ENCODE measurements at regions of chr2 and their contacts with region 1.

Region 1: DNA sequence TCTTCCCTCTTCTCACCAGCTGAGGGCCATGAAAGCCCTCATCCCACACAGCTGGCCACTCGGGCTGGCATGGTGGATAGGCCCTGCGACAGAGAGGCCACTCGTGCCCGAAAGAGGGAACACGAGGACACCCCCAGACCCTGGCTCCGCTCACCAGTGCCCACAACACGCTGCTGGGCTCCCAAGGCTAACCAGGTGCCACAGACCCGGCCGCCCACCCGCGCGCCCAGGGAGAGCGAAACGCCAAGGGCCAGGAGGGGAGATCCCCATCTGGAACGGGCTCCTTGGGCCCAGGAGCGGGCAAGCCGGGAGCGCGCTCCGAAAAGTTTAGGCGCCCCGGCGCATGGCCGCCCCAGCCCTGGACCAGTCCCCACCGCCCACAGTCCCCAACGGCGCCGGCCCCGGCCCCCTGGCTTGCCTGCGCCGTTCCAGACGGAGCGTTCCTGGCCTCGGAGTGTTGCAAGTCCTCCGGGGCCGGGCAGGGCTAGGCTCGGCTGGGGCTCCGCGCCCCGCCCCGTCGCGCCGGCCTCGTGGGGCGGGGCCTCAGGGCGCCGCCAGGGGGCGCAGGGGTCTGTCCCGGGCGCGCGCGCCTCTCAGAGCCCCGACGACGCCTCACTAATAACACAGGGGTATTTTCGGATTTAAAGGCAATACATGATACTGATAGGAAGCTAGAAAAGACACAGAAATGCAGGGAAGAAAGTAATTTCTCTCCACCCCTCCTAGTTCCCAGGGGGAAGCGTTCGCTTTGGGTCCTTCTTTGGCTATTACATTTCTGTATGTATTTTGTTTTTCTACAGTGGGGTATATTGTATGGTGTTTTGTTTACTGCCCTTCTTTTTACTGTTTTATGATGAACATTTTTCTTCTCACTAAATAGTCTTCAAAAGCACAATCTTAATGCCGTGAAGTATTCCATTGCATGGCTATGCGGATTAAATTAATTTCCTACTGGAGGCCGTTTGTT is at the start of gene TMBIM1:
- DNase-seq: peak; percentile 83
- H3K4me3 Mint-ChIP-seq: peak within 1 kb of the TSS; percentile 80
- H3K27ac Mint-ChIP-seq: peak within 1 kb of the TSS; percentile 89
- H3K4me1 Mint-ChIP-seq: peaks cover 51% of the 10 kb centered on the region
- H3K27me3 Mint-ChIP-seq: no peaks in the 10 kb centered on the region
- total RNA-seq, gene TMBIM1: 71.8 to 79.2 TPM

Region 2: DNA sequence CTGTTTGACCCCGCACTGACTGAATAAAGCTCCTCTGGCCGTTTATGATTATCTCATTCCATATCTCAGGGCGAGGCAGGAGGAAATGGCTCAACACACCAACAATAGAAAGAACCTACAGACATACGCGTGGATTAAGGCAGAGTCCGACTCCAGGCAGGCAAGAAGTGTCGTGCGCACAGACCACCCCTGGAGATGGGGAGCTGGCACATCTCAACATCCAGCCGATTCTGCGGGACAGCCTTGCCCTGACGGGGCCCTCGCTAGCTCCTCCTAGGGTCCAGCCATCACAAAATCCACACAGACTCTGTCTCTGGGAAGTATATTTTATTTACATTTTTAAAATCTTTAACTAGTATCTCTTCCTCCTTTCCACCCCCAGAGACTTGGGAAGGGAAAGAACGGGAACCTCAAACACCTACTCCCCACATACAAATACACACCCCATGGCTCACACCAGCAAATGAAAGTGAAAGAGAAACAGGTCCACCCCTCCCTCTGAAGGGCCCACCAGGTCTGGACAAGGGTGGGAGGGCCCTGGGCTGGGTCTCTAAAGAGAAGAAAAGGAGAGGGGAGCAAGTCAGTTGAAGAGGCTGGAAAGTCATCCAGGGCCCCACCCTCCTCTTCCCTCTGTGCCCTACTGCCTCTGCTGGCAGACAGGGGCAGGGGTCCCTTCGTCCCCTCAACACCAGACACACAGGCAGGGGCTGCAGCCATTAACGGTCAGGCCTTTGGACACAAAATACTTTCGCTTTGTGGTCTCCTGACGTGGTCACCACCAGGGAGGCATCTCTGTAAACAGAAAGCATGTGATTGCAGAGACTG is 28.3 kb before region 1 on chr2:
- CTCF ChIA-PET with region 1: no interaction called
- POLR2A ChIA-PET with region 1: no interaction called
- intact Hi-C with region 1: no loop called
- DNase-seq: no peak
- H3K4me3 Mint-ChIP-seq: no peak overlapping the region
- H3K27ac Mint-ChIP-seq: no peak overlapping the region
- H3K4me1 Mint-ChIP-seq: peaks cover 13% of the 10 kb centered on the region
- H3K27me3 Mint-ChIP-seq: no peaks in the 10 kb centered on the region

Region 3: DNA sequence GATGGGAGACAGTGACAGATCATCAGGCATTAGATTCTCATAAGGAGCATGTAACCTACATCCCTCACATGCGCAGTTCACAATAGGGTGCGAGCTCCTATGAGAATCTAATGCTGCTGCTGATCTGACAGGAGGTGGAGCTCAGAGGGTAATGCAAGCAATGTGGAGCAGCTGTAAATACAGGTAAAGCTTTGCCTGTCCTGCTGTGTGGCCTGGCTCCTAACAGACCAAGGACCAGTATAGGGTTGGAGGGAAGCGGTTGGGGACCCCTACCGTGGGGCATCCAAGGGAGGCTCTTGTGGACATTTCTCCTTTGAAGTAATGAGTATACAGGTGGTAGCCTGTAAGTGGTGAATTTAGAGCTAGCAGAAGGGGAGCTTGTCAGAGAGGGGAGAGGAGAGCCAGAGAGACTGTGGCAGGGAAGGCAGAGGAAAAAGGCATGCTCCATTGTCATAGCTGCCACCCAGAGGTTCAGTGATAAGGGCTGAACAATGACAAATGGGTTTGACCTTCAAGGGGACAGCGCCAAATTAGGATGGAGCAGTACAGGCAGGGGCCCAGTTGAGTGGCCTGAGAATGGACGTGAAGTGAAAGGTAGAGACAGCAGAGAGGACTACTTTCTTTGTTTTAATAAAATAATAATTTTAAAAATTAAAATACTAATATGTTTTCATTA is 15.2 kb after region 1 on chr2:
- CTCF ChIA-PET with region 1: interaction called, 16 read pairs
- POLR2A ChIA-PET with region 1: no interaction called
- intact Hi-C with region 1: no loop called
- DNase-seq: no peak
- H3K4me3 Mint-ChIP-seq: no peak overlapping the region
- H3K27ac Mint-ChIP-seq: no peak overlapping the region
- H3K4me1 Mint-ChIP-seq: no peaks in the 10 kb centered on the region
- H3K27me3 Mint-ChIP-seq: no peaks in the 10 kb centered on the region

Region 4: DNA sequence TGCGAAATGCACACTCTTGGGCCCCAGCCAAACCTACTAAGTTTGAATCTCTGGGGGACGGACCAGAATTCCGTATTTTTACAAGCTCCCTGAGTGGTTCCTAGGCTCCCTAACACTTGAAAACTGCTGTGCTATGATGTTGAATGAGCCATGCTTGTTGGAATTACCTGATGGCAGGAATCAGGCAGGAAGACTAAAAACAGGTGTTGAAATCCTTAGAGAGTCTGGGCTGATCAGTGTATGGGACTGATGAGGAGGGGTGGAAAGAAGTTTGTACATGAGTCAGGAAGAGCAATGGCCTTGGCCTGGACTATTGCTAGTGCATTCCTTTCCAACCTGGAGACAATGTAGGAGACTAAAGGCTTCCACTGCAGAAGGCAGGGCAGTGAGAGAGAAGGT is 24.9 kb after region 1 on chr2:
- CTCF ChIA-PET with region 1: interaction called, 5 read pairs
- POLR2A ChIA-PET with region 1: no interaction called
- intact Hi-C with region 1: loop called (anchors 2 kb)
- DNase-seq: no peak
- H3K4me3 Mint-ChIP-seq: no peak overlapping the region
- H3K27ac Mint-ChIP-seq: peak overlapping the region; percentile 84
- H3K4me1 Mint-ChIP-seq: peaks cover 27% of the 10 kb centered on the region
- H3K27me3 Mint-ChIP-seq: no peaks in the 10 kb centered on the region

Region 5: GRCh38 chr2:218360447-218360846 is 68.1 kb after region 1 on chr2:
- CTCF ChIA-PET with region 1: interaction called, 13 read pairs
- POLR2A ChIA-PET with region 1: no interaction called
- intact Hi-C with region 1: no loop called
- DNase-seq: no peak
- H3K4me3 Mint-ChIP-seq: no peak overlapping the region
- H3K27ac Mint-ChIP-seq: no peak overlapping the region
- H3K4me1 Mint-ChIP-seq: no peaks in the 10 kb centered on the region
- H3K27me3 Mint-ChIP-seq: no peaks in the 10 kb centered on the region

Region 6: GRCh38 chr2:218582076-218582475 is 289.7 kb after region 1 on chr2:
- CTCF ChIA-PET with region 1: no interaction called
- POLR2A ChIA-PET with region 1: no interaction called
- intact Hi-C with region 1: loop called (anchors 5 kb)
- DNase-seq: no peak
- H3K4me3 Mint-ChIP-seq: no peak overlapping the region
- H3K27ac Mint-ChIP-seq: peak overlapping the region; percentile 65
- H3K4me1 Mint-ChIP-seq: peaks cover 42% of the 10 kb centered on the region
- H3K27me3 Mint-ChIP-seq: no peaks in the 10 kb centered on the region

Region 7: GRCh38 chr2:218648088-218648786 is 355.9 kb after region 1 on chr2:
- CTCF ChIA-PET with region 1: no interaction called
- POLR2A ChIA-PET with region 1: no interaction called
- intact Hi-C with region 1: loop called (anchors 5 kb)
- DNase-seq: peak; percentile 66
- H3K4me3 Mint-ChIP-seq: no peak overlapping the region
- H3K27ac Mint-ChIP-seq: no peak overlapping the region
- H3K4me1 Mint-ChIP-seq: peaks cover 9% of the 10 kb centered on the region
- H3K27me3 Mint-ChIP-seq: no peaks in the 10 kb centered on the region